GM10248 (cell line): ENCODE measurements at regions of chr3 and their contacts with region 1.

Region 1: DNA sequence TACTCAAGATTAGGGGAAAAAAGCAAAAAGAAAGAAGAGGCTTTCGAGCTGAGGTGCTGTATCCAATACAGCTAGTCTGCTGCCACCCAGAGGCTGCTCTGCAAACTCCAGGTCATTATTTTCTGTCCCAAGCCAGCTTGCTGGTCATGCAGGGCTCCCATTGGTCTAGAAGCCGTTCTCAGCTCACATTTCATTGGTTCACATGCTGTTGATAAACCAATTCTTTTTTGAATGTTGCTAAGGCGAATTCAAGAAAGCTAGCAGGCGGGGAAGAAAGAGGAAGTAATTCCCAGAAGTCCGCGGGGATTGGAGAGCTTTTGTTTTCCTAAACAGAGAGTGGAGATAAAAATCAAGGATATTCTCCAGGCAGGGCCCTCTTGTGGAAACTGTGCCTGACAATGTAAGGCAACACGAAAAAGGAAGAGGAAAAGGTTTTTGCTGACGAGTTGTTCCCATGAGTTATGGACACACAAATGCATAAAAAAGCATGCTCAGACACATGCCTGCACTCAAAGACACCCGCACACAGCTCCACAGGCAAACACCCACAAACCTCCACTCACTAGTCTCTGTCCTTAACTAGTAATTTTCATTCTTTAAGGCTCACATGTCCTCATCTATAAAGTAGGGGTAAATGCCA is 33.4 kb downstream of the FSTL1 start:
- DNase-seq: peak; percentile 91
- CTCF ChIP-seq: peak; percentile 73

Region 2: GRCh38 chr3:119891944-119892721 is 525.3 kb before region 1 on chr3:
- CTCF ChIA-PET with region 1: interaction called, 12 read pairs
- POLR2A ChIA-PET with region 1: no interaction called
- DNase-seq: peak; percentile 19
- CTCF ChIP-seq: peak; percentile 60

Region 3: GRCh38 chr3:120114981-120115380 is 302.4 kb before region 1 on chr3:
- CTCF ChIA-PET with region 1: no interaction called
- POLR2A ChIA-PET with region 1: no interaction called
- DNase-seq: no peak
- CTCF ChIP-seq: no peak

Region 4: DNA sequence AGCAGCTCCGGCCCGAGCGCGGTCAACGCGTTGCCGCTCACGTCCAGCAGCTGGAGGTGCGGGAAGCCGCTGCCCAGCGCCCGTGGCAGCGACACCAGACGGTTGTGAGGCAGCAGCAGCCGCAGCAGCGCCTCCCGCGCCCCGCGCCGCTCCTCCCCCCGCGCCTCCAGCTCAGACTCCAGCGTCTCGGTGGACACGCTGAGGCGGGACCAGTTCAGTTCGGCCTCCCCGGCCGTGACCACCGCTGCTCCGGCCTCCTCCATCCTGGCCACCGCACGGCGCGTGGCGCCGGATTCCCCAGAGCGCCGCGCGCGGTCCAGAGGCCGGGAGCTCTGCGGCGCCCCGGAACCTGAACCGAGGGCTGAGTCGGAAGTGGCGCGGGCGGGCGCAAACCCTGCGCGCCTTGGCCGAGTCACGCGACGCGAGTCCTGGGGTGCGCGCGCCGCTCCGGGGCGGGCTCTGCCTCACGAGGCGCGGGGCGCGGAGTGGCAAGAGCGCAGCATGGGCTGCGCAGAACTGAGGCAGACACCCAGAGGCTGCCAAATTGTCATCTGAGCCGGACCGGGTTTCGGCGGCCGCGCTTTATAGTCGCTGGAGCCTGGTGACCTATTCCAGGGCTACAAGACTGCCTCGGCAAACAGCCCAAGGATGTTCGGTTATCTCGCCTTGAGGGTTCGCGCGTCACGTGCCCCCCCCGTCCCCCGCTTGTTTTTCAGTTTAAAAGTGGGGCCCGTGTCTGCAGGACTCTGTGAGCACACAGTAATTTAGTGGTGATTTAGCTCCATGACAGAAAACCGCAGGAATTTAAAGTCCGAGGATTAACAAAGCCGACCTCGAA is 68.2 kb before region 1 on chr3 and contains the start of gene LRRC58:
- CTCF ChIA-PET with region 1: interaction called, 18 read pairs
- POLR2A ChIA-PET with region 1: no interaction called
- DNase-seq: peak; percentile 92
- CTCF ChIP-seq: peak; percentile 49

Region 5: DNA sequence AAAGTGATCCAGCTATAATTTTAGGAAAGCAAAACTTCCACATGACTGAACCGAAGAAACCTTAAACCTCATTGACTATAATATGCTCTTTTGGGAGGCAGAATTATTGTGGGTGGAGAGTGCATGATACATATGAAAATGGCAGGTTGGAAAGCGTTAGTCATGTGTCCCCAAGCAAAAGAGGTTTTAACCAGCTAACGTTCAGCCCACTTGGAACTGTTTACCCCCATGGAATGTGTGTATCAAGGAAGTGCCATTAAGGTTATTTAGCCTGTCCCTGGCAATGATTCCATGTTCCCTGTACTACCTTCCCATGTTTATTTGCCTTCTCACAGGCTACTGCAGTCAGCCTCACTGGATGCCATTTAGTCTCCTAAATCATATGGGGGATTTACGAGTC is 24.1 kb before region 1 on chr3:
- CTCF ChIA-PET with region 1: interaction called, 13 read pairs
- POLR2A ChIA-PET with region 1: no interaction called
- DNase-seq: no peak
- CTCF ChIP-seq: no peak

Region 6: DNA sequence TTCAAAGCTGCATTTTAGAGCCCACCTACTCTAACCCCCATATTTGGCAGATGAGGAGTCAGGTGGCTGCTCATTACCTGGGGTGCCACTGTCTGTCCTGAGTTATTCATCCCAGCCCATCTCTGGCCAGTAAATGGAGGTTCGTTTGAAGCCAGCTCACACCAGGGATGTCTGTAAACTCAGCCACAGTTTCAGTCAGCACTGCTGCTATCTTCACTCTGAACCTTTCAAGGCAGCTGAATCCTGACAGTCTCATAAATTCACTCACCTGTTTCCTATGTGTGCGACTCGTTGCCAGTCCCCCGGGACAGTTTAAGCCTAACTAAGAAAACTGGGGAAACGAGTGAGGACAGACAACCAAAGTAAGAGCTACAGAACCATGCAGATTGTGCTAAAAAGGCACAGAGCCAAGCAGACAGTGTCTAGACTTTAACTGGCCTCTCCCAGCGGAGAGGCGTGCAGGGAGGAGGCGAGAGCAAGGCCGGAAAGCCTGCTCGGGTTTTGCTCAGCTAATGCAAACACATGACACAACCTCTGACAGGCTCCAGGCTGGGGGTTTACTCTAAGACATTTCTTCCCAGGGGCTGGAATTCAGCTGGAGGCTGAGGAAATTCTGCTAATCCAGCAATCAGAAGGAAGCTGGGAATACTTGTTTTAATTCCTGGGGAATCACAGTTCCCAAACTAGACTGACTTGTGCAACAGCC is 21.4 kb after region 1 on chr3:
- CTCF ChIA-PET with region 1: interaction called, 18 read pairs
- POLR2A ChIA-PET with region 1: no interaction called
- DNase-seq: no peak
- CTCF ChIP-seq: no peak

Region 7: DNA sequence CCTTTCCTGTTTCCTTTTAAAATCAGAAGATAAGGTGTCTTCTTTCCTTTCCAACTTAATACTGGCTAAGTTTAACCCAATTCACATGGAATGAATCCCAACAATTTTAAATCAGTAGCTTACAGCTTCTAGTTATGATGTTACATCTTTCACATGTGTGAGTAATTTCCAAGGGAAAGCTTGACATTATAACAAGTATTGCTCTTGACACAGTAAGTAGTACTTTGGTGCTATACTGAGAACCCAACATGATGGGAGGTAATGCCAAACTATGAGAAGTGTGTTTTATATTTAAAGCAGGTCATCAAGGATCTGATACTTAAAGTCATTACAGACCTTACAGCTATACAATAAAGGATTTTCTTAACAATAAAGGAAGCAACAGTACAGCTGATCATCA is 295.9 kb after region 1 on chr3:
- CTCF ChIA-PET with region 1: no interaction called
- POLR2A ChIA-PET with region 1: no interaction called
- DNase-seq: no peak
- CTCF ChIP-seq: no peak

Region 8: GRCh38 chr3:120795017-120795648 is 377.7 kb after region 1 on chr3:
- CTCF ChIA-PET with region 1: interaction called, 20 read pairs
- POLR2A ChIA-PET with region 1: no interaction called
- DNase-seq: peak; percentile 47
- CTCF ChIP-seq: peak; percentile 90